PC-3 (cell line): ENCODE measurements at regions of chrX and their contacts with region 1.

Region 1: GRCh38 chrX:103711533-103712369 is 1.0 kb downstream of the TMEM31 start:
- DNase-seq: peak; percentile 81
- ATAC-seq: peak; percentile 42
- H3K4me3 ChIP-seq: no peak overlapping the region
- H3K27ac ChIP-seq: no peak overlapping the region
- H3K4me1 ChIP-seq: peaks cover 7% of the 10 kb centered on the region
- H3K27me3 ChIP-seq: no peaks in the 10 kb centered on the region
- CTCF ChIP-seq: peak; percentile 79

Region 2: DNA sequence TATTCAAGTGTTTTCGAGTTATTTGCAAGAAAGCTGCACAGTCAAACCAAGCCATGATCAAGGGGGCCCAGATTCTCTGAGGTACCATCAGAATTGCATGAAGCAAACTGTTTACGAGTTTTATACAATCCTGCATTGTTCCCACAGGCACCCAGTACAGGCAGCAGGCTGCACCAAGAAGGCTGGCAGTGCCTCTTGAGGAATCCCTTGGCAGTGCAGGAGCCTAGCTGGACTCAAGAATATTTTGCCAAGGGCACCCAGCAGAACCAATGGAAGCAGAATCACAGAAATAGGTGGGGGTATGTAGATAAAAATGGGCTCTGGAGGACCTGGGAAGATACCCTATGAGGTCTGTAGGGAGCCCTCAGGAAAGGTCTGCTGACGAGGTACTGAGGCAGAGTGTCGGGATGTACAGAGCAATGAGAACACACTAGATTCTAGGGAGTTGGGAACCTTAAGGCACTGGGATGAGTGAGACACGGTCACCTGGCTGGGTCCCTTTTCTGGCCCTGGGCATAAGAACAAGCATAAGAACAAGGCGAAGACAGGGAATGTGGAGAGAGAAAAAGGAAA is 62.4 kb after region 1 on chrX:
- CTCF ChIA-PET with region 1: no interaction called
- POLR2A ChIA-PET with region 1: no interaction called
- intact Hi-C with region 1: loop called (anchors 1 kb)
- DNase-seq: peak; percentile 72
- ATAC-seq: peak; percentile 89
- H3K4me3 ChIP-seq: no peak overlapping the region
- H3K27ac ChIP-seq: no peak overlapping the region
- H3K4me1 ChIP-seq: no peaks in the 10 kb centered on the region
- H3K27me3 ChIP-seq: peaks cover 4% of the 10 kb centered on the region; the same call in 1 of the 2 replicates
- CTCF ChIP-seq: peak; percentile 78

Region 3: DNA sequence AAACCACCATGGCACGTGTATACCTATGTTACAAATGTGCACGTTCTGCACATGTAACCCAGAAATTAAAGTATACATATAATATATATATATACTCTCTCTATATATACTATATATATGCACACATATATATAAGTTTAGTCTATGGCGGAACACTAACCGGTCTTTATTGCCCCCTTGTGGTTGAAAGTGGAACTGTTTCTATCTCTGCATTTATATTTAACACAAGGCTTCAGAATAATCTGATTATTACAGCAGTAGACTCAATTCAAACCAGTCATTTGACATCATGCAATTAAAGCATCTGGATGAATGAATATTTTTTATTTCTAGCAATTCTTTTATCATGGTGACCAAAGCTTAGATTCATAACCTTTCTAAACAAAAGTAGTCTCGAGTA is 105.8 kb after region 1 on chrX:
- CTCF ChIA-PET with region 1: no interaction called
- POLR2A ChIA-PET with region 1: no interaction called
- intact Hi-C with region 1: loop called (anchors 5 kb)
- DNase-seq: peak; percentile 87
- ATAC-seq: peak; percentile 60
- H3K4me3 ChIP-seq: no peak overlapping the region
- H3K27ac ChIP-seq: no peak overlapping the region
- H3K4me1 ChIP-seq: no peaks in the 10 kb centered on the region
- H3K27me3 ChIP-seq: no peaks in the 10 kb centered on the region
- CTCF ChIP-seq: peak; percentile 56

Region 4: DNA sequence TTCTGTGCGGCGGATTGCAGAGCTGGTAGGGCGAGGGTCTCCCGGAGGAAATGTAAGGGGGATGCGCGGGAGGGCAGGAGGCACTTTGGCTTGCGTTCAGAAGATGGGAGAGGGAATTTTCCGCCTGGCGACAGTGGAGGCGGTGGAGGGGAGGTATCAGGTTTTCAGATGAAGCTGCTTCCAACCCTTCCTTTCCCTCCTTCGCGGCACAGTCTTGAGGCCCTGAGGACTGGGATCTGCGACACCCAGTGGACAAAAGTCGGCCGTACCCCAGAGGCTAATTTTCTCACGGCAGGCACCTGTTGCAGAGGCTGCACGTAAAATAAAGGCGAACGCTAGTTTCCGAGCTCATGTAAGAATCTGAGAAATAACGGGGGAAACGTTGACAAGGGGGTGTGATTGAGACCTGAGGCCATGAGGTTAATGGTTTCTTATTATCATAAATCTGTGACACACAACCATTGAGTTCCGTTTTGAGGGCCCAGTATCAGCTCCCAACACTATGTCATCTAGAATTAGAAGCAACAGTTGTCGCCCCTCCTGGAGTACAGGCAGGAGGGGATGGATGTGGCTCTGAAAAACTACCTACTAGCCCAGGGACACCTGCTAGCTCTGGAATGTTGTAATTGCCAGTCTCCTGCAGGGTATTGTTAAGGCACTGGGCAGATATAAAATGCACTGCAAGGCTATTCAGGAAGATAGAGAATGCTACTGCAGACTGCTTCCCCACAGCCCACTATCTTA is 401.6 kb after region 1 on chrX:
- CTCF ChIA-PET with region 1: no interaction called
- POLR2A ChIA-PET with region 1: no interaction called
- intact Hi-C with region 1: no loop called
- DNase-seq: peak; percentile 72
- ATAC-seq: peak; percentile 89
- H3K4me3 ChIP-seq: peak overlapping the region; percentile 75
- H3K27ac ChIP-seq: no peak overlapping the region
- H3K4me1 ChIP-seq: no peaks in the 10 kb centered on the region; the same call in 1 of the 2 replicates
- H3K27me3 ChIP-seq: peaks cover 7% of the 10 kb centered on the region
- CTCF ChIP-seq: peak; percentile 64